Tibial artery (tissue), 4 donors: ENCODE measurements at regions of chr1 and their contacts with region 1.

Region 1: DNA sequence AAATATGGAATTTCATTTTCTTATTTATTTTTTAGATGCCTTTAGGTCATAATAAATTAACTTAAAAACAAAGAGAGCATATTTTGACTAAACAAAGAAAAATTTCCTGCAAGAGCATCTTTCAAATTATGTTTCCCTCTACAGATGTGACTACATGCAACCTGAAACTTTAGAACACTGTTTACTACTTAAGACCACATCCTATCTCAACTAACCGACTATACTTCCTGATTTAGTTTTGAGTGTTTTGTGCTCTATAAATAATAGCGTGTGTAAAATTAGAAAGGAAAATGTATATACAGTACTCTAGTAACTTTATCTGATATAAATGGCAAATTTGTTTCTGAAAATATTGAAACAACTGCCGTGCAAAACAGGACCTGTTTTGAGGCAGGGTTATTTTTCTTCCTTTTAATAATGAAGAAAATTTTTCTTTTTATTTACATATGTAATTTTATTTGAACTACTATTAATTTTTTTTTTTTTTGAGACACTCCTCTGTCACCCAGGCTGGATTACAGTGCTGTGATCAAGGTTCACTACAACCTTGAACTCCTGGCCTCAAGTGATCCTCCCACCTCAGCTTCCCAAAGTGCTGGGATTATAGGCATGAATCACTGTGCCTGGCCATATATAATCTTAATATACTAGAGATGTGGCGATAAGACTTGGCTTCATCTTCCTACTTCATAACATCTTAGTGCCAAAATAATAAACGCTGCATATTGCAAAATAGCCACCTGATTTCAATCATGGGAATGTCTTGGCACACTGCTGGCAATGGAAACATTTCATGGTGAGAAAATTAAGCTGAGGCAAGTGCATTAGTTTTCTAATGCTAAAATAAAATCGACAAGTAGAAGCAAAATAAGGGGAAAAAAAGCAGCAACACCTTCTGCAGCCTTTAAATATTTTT is 12.3 kb downstream of the ZRANB2 start:
- DNase-seq: no peak
- H3K4me3 ChIP-seq: no peak overlapping the region
- H3K27ac ChIP-seq: no peak overlapping the region
- H3K4me1 ChIP-seq: no peaks in the 10 kb centered on the region
- H3K27me3 ChIP-seq: no peaks in the 10 kb centered on the region
- CTCF ChIP-seq: no peak

Region 2: GRCh38 chr1:70234733-70235132 is 833.9 kb before region 1 on chr1:
- intact Hi-C with region 1: loop called (anchors 10 kb)
- DNase-seq: no peak
- H3K4me3 ChIP-seq: no peak overlapping the region
- H3K27ac ChIP-seq: no peak overlapping the region
- H3K4me1 ChIP-seq: no peaks in the 10 kb centered on the region
- H3K27me3 ChIP-seq: no peaks in the 10 kb centered on the region
- CTCF ChIP-seq: no peak

Region 3: DNA sequence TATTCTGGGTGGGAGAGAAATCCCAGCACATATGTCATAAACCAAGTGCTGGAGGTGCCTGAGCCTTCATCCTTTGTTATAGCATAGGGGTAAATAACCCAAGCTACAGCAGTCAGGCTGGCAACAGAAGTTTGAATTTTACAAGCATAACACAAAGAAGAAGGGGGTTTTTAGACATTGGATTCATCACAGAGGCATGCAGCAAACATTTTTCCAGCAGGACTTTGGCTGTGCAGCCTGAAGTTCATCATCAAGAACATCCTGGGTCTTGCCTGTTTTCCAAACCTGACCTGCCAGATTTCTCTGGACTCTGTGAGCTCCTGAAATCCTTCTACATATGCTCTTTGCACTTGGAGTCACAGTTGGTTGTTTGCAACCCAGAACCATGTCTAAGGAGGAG is 37.2 kb before region 1 on chr1:
- intact Hi-C with region 1: no loop called
- DNase-seq: no peak
- H3K4me3 ChIP-seq: no peak overlapping the region
- H3K27ac ChIP-seq: peak overlapping the region; percentile 34 to 61
- H3K4me1 ChIP-seq: peaks cover 0 to 81% (median 13%) of the 10 kb centered on the region in 4 donors
- H3K27me3 ChIP-seq: no peaks in the 10 kb centered on the region
- CTCF ChIP-seq: no peak